ENCODE measurements at regions of chr6 and their contacts with region 1.

Region 1: GRCh38 chr6:41655711-41656691 is 17.7 kb downstream of the MDFI start:
- DNase-seq: peak; percentile 48
- H3K4me3 ChIP-seq: no peak overlapping the region
- H3K27ac ChIP-seq: no peak overlapping the region
- H3K4me1 ChIP-seq: no peaks in the 10 kb centered on the region
- H3K27me3 ChIP-seq: no peaks in the 10 kb centered on the region
- CTCF ChIP-seq: no peak

Region 2: DNA sequence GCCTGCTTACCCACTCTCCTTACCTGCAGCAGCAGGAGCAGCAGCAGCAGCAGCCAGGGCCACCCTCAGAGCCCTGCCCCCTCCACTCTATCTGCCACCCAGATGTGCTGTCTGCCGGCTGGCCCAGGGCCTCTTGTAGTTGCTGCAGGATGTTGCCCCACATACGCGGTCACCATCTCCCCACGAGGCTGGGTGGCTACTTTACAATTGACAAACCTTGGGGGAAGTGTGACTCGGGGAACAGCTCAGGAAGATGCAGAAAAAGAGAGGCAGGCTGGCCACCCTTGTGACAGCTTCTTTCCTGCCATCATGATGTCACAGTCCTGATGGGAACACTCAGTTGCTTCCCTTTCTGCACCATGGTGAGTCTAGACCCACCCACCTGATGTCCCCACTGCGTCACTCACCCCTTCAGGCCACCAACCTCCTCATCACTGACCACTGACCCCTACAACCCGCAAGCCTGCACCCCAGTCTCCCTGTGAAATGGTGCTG is 384.1 kb before region 1 on chr6:
- CTCF ChIA-PET with region 1: interaction called, 51 read pairs
- dilution Hi-C with region 1: no loop called
- in situ Hi-C with region 1: no loop called
- intact Hi-C with region 1: no loop called
- DNase-seq: no peak
- H3K4me3 ChIP-seq: no peak overlapping the region
- H3K27ac ChIP-seq: no peak overlapping the region
- H3K4me1 ChIP-seq: no peaks in the 10 kb centered on the region
- H3K27me3 ChIP-seq: no peaks in the 10 kb centered on the region
- CTCF ChIP-seq: no peak

Region 3: GRCh38 chr6:41591859-41592502 is 64.0 kb before region 1 on chr6:
- CTCF ChIA-PET with region 1: no interaction called
- dilution Hi-C with region 1: loop called (anchors 5 kb)
- in situ Hi-C with region 1: no loop called
- intact Hi-C with region 1: no loop called
- DNase-seq: peak; percentile 41
- H3K4me3 ChIP-seq: no peak overlapping the region
- H3K27ac ChIP-seq: no peak overlapping the region
- H3K4me1 ChIP-seq: no peaks in the 10 kb centered on the region
- H3K27me3 ChIP-seq: no peaks in the 10 kb centered on the region
- CTCF ChIP-seq: peak; percentile 88 to 92

Region 4: DNA sequence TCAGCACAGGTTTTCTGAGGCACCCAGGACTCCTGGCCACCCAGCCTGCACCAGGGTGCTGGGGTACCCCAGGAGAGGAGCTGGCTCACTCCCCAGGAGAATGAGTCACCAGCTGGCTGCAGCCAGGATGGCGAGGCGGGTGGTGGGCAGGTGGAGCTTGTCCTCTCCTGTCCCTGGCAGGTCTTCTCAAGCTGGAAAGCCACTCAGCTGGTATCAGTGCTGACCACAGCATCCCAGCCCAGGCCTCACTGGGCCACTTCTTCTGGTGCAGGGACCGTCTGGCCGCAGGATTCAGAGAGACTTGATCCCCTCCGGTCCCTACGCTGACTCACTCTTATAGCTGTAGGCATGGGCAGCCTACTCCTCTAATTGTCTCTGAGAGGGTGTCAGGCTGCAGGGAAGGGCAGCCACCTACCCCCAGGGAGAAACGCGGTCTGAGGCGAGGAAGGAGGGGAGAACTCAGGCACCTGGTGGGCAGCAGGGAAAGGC is 57.2 kb after region 1 on chr6:
- CTCF ChIA-PET with region 1: no interaction called
- dilution Hi-C with region 1: loop called (anchors 5 kb)
- in situ Hi-C with region 1: no loop called
- intact Hi-C with region 1: no loop called
- DNase-seq: peak; percentile 96
- H3K4me3 ChIP-seq: peak overlapping the region in 1 of 3 experiments; percentile 1
- H3K27ac ChIP-seq: peak overlapping the region; percentile 51
- H3K4me1 ChIP-seq: peaks cover 51% of the 10 kb centered on the region
- H3K27me3 ChIP-seq: no peaks in the 10 kb centered on the region
- CTCF ChIP-seq: no peak